H1 (cell line): ENCODE measurements at regions of chr18 and their contacts with region 1.

Region 1: GRCh38 chr18:23131693-23132319 is 3.5 kb upstream of the CABLES1 start:
- DNase-seq: no peak
- H3K4me3 ChIP-seq: no peak overlapping the region
- H3K27ac ChIP-seq: no peak overlapping the region
- H3K4me1 ChIP-seq: peaks cover 1 to 13% (median 11%) of the 10 kb centered on the region in 4 experiments; a peak in 6 of 7 replicates
- H3K27me3 ChIP-seq: peaks cover 0 to 8% (median 1%) of the 10 kb centered on the region in 4 experiments; a peak in 3 of 7 replicates
- CTCF ChIP-seq: peak; percentile 32 to 82 (median 69)
- EP300 ChIP-seq: no peak
- POLR2A ChIP-seq: no peak
- RAD21 ChIP-seq: peak; percentile 77 to 83

Region 2: DNA sequence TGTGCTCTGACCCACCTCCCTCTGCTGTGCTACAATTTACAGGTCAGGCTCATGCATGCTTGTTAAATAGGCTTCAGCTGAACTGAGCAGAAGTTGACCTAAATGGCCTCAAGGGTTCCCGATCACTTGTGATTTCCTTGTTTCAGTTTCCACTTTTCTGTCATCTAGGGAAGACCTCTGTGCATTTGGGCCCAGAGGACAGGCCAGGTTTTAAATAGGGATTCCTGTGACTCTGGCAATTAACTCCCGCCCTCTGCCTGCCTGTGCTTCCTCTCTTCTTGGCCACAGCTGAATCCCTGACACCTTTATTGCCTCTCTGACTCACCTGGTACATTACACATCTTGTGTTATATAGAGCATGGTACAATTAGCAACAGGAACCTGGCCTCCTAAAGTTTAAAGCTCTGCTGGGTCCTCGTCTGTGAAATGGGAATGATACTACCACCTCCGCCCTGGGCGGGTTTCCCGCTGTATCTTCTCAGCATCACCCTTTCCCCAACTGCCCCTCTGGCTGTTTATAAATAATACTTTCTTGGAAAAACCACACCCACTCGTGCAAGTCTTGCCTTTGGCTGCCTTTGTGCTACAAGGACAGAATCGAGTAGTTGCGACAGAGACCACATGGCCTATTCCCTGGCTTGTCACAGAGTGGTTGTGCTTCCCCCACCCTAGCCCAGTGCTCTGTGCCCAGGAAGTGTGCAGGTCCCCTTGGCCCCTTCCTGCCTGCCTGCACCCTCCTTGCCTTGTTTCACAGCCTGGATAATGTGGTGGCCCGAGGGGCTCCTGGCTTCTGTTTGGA is 11.4 kb after region 1 on chr18:
- CTCF ChIA-PET with region 1: interaction called, 11 read pairs
- POLR2A ChIA-PET with region 1: interaction called, 22 read pairs
- DNase-seq: no peak
- H3K4me3 ChIP-seq: no peak overlapping the region
- H3K27ac ChIP-seq: no peak overlapping the region
- H3K4me1 ChIP-seq: peaks cover 7 to 30% (median 12%) of the 10 kb centered on the region in 4 experiments
- H3K27me3 ChIP-seq: no peaks in the 10 kb centered on the region
- CTCF ChIP-seq: no peak
- EP300 ChIP-seq: no peak
- POLR2A ChIP-seq: no peak
- RAD21 ChIP-seq: no peak

Region 3: DNA sequence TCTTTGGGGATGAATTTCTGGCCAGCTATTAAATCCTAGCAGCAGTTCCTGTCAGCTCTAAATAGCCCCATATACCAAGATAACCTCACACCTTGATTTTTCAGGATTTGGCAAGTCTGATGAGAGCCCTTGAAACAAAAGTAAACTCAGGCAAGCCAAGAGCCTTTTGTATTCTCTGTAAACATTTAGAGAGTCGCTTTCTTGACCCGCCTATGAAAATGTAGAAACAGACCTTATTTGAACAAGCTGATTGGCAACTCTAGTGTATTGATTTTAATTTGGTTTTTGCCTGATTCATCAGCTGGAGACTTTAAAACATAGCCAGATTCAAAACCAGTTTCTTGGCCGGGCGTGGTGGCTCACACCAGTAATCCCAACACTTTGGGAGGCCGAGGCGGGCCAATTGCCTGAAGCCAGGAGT is 46.9 kb after region 1 on chr18:
- CTCF ChIA-PET with region 1: no interaction called
- POLR2A ChIA-PET with region 1: interaction called, 10 read pairs
- DNase-seq: no peak
- H3K4me3 ChIP-seq: no peak overlapping the region
- H3K27ac ChIP-seq: no peak overlapping the region
- H3K4me1 ChIP-seq: peaks cover 1 to 18% (median 16%) of the 10 kb centered on the region in 4 experiments
- H3K27me3 ChIP-seq: no peaks in the 10 kb centered on the region
- CTCF ChIP-seq: no peak
- EP300 ChIP-seq: no peak
- POLR2A ChIP-seq: no peak
- RAD21 ChIP-seq: no peak

Region 4: GRCh38 chr18:23213200-23213599 is 81.4 kb after region 1 on chr18:
- CTCF ChIA-PET with region 1: interaction called, 27 read pairs
- POLR2A ChIA-PET with region 1: interaction called, 3 read pairs
- DNase-seq: no peak
- H3K4me3 ChIP-seq: no peak overlapping the region
- H3K27ac ChIP-seq: no peak overlapping the region
- H3K4me1 ChIP-seq: no peaks in the 10 kb centered on the region
- H3K27me3 ChIP-seq: no peaks in the 10 kb centered on the region
- CTCF ChIP-seq: no peak
- EP300 ChIP-seq: no peak
- POLR2A ChIP-seq: no peak
- RAD21 ChIP-seq: no peak

Region 5: DNA sequence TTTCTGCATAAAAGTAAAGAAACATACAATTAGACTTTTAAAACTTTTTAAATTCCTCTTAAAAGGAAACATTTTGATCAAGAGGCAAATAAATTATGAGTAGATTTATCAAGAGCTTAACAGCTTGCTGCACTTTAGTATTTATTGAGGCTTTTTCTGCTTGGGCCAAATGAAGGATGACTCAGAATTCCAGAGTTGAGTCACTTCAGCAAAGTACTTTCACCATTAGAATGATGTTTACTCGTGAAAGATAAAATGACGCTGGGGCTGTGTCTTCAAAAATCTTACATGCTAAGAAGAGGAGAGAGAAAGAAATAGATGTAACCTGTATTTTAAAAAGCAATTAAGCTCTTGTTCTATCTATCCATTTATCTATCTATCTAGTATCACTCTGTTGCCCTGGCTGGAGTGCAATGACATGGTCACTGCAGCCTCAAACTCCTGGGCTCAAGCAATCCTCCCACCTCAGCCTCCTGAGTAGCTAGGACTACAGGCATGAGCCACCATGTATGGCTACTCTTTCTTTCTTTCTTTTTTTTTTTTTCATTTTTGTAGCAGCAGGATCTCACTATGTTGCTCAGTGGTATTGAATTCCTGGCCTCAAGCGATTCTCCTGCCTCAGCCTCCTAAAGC is 246.0 kb after region 1 on chr18:
- CTCF ChIA-PET with region 1: interaction called, 20 read pairs
- POLR2A ChIA-PET with region 1: no interaction called
- DNase-seq: no peak
- H3K4me3 ChIP-seq: no peak overlapping the region
- H3K27ac ChIP-seq: no peak overlapping the region
- H3K4me1 ChIP-seq: peaks cover 2 to 6% (median 4%) of the 10 kb centered on the region in 4 experiments; a peak in 4 of 7 replicates
- H3K27me3 ChIP-seq: no peaks in the 10 kb centered on the region
- CTCF ChIP-seq: no peak
- EP300 ChIP-seq: no peak
- POLR2A ChIP-seq: no peak
- RAD21 ChIP-seq: no peak

Region 6: DNA sequence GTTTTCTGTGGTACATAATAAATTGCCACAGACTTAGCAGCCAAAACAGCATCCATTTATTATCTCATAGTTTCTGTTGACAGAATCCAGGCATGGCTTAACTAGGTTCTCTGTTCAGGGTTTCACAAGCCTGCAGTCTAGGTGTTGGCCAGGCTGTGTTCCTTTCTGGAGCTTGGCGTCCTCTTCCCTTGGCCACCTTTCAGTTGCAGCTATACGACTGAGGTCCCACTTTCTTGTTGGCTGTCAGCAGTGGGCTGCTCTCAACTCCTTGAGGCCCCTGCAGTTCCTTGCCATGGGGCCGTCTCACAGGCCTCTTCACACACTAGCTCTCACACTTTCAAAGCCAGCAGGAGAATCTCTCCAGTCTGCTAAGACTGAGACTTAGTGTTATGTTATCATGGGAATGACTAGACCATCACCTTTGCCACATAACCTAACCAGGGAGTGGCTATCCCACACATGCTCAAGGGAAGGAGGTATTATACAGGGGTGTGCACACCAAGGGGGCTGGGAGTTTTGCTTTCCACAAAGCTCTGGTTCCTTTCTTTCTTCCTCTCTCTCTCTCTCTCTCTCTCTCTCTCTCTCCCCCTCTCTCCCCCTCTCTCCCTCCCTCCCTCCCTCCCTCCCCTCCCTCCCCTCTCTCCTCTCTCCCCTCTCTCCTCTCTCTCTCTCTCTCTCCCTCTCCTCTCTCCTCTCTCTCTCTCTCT is 337.1 kb after region 1 on chr18:
- CTCF ChIA-PET with region 1: no interaction called
- POLR2A ChIA-PET with region 1: no interaction called
- DNase-seq: no peak
- H3K4me3 ChIP-seq: no peak overlapping the region
- H3K27ac ChIP-seq: no peak overlapping the region
- H3K4me1 ChIP-seq: no peaks in the 10 kb centered on the region
- H3K27me3 ChIP-seq: no peaks in the 10 kb centered on the region
- CTCF ChIP-seq: no peak
- EP300 ChIP-seq: no peak
- POLR2A ChIP-seq: no peak
- RAD21 ChIP-seq: no peak

Region 7: DNA sequence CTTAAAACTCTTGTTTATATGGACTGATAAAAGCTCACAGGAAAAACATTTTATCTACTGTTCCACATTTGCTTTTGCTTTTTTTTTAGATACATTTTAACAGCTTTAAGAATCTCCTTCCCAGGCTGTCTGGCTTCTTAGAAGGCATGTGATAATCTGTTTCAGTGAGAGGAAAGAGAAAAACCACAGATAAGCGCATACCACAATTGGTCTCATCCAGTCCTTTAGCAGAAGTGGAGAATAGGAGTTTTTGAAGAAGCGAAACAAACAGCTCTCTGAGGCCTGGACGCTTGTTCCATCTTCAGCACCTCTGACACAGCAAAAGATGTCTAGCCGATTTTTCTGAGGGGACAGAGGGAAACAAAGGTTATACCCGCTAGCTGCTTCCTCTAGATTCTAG is 409.1 kb after region 1 on chr18:
- CTCF ChIA-PET with region 1: no interaction called
- POLR2A ChIA-PET with region 1: no interaction called
- DNase-seq: no peak
- H3K4me3 ChIP-seq: no peak overlapping the region
- H3K27ac ChIP-seq: no peak overlapping the region
- H3K4me1 ChIP-seq: no peaks in the 10 kb centered on the region
- H3K27me3 ChIP-seq: no peaks in the 10 kb centered on the region
- CTCF ChIP-seq: no peak
- EP300 ChIP-seq: no peak
- POLR2A ChIP-seq: no peak
- RAD21 ChIP-seq: no peak